Activated CD4-positive, alpha-beta memory T cell treated with anti-CD3 and anti-CD28 coated beads, Interleukin-2, amount 10 ng/mL, durations not matched to agents 7 days and 5 days (primary cell): ENCODE measurements at regions of chr11 and their contacts with region 1.

Region 1: GRCh38 chr11:102341844-102342318 is 5.1 kb upstream of the BIRC2 start:
- DNase-seq: peak; percentile 72
- H3K4me3 Mint-ChIP-seq: no peak overlapping the region
- H3K27ac Mint-ChIP-seq: no peak overlapping the region
- H3K4me1 Mint-ChIP-seq: peaks cover 20% of the 10 kb centered on the region
- H3K27me3 Mint-ChIP-seq: no peaks in the 10 kb centered on the region

Region 2: GRCh38 chr11:102293873-102294601 is 47.8 kb before region 1 on chr11:
- CTCF ChIA-PET with region 1: interaction called, 53 read pairs
- POLR2A ChIA-PET with region 1: interaction called, 6 read pairs
- DNase-seq: no peak
- H3K4me3 Mint-ChIP-seq: peak overlapping the region; percentile 83
- H3K27ac Mint-ChIP-seq: peak overlapping the region; percentile 87
- H3K4me1 Mint-ChIP-seq: peaks cover 21% of the 10 kb centered on the region
- H3K27me3 Mint-ChIP-seq: no peaks in the 10 kb centered on the region

Region 3: GRCh38 chr11:102323542-102324251 is 18.2 kb before region 1 on chr11:
- CTCF ChIA-PET with region 1: interaction called, 31 read pairs
- POLR2A ChIA-PET with region 1: no interaction called
- DNase-seq: no peak
- H3K4me3 Mint-ChIP-seq: no peak overlapping the region
- H3K27ac Mint-ChIP-seq: no peak overlapping the region
- H3K4me1 Mint-ChIP-seq: peaks cover 58% of the 10 kb centered on the region
- H3K27me3 Mint-ChIP-seq: no peaks in the 10 kb centered on the region

Region 4: GRCh38 chr11:102390667-102391465 is 49.0 kb after region 1 on chr11:
- CTCF ChIA-PET with region 1: interaction called, 20 read pairs
- POLR2A ChIA-PET with region 1: no interaction called
- DNase-seq: peak; percentile 59
- H3K4me3 Mint-ChIP-seq: no peak overlapping the region
- H3K27ac Mint-ChIP-seq: peak overlapping the region; percentile 23
- H3K4me1 Mint-ChIP-seq: peaks cover 13% of the 10 kb centered on the region
- H3K27me3 Mint-ChIP-seq: no peaks in the 10 kb centered on the region

Region 5: DNA sequence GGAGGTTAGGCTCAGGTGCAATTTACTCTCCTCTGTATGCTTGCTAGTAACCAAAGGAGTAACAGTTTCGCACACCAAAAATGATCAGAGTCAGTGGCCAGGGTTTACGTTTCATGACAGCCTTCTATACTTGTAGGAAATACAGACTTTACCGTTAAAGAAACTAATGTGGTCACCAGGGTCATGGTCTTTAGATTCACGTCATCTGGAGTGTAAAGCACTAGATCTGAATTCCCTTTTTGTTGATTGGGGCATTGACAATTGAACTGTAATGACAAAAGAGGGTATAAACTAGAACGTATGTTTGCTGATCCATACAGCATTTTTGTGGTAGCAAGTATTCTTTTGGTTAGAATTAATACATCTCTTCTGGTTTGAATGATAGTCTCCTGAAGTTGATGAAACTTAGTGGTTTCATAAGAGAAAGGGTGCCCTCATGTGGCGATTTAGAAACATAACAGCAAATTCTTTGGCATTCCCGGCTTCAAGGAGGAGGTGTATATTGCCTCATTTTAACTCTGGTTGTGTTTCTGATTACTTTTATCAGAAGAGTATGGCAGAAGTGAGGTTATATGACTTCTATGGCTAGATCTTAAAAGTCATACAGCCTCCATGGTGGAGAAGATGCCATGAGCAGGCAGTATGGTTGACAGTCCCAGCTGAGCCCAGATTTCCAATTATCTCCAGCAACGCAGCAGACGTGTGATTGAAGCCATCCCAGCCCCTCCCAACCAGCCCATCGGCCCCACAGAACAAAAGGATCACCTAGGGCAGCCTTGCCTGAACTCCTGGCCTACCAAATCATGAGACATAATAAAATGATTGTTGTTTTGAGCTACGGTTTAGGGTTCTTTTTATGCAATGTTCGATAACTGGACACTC is 153.5 kb after region 1 on chr11:
- CTCF ChIA-PET with region 1: interaction called, 41 read pairs
- POLR2A ChIA-PET with region 1: interaction called, 3 read pairs
- DNase-seq: peak; percentile 24
- H3K4me3 Mint-ChIP-seq: no peak overlapping the region
- H3K27ac Mint-ChIP-seq: no peak overlapping the region
- H3K4me1 Mint-ChIP-seq: peaks cover 7% of the 10 kb centered on the region
- H3K27me3 Mint-ChIP-seq: peaks cover 24% of the 10 kb centered on the region

Region 6: GRCh38 chr11:102614485-102614884 is 272.6 kb after region 1 on chr11:
- CTCF ChIA-PET with region 1: interaction called, 34 read pairs
- POLR2A ChIA-PET with region 1: interaction called, 4 read pairs
- DNase-seq: no peak
- H3K4me3 Mint-ChIP-seq: no peak overlapping the region
- H3K27ac Mint-ChIP-seq: no peak overlapping the region
- H3K4me1 Mint-ChIP-seq: peaks cover 9% of the 10 kb centered on the region
- H3K27me3 Mint-ChIP-seq: peaks cover 5% of the 10 kb centered on the region